GM13977 (cell line): ENCODE measurements at regions of chr12 and their contacts with region 1.

Region 1: DNA sequence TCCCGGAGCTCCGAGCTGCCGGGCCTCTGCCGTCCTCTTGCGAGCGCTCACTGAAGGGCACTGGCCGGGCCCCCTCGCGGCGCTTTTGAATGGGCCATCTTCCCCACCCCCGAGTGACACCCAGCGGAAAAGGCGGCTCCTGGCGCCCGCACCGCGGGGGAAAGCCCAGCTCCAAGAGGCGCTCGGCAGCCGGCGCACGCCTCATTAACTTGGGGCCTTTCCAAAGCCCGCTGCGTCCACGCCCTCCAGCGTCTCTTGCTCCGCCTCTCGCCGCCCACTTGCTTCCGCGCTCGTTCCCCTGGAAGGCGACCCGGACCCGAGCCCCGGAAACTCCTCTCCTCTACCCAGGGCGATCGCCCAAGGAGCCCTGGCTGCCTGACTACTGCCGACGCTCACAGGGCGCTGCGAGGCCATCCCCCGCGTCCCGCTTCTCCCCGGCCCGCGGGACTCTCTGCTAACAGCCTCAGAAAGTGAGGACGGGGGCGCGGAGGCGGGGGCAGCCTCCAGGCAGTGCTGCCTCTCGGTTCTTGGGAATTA is at the start of gene PHLDA1:
- DNase-seq: peak; percentile 95
- CTCF ChIP-seq: peak; percentile 74

Region 2: DNA sequence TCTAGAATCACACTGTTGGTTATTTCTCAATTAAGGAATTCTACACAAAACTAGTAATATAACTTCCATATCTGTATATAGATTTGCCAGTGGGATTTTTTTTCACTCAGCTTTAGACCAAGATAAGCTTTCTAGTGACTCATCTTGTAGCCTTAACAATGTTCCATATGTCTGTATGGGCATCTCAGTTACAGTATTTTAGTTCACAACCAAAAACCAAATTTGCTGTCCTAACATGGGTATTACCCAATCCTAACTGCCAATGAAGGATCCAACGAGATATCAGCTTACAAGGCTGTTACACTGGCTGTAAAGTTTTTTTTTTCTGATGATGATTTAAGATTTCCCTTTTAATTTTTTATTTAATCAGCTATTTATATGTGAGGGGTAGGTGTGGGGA is 488.7 kb before region 1 on chr12:
- in situ Hi-C with region 1: loop called (anchors 10 kb)
- DNase-seq: no peak
- CTCF ChIP-seq: no peak

Region 3: GRCh38 chr12:76144245-76144549 is 112.6 kb after region 1 on chr12:
- in situ Hi-C with region 1: no loop called
- DNase-seq: no peak
- CTCF ChIP-seq: no peak

Region 4: GRCh38 chr12:76329163-76329562 is 297.6 kb after region 1 on chr12:
- in situ Hi-C with region 1: no loop called
- DNase-seq: no peak
- CTCF ChIP-seq: no peak